ENCODE measurements at regions of chr1 and their contacts with region 1.

Region 1: DNA sequence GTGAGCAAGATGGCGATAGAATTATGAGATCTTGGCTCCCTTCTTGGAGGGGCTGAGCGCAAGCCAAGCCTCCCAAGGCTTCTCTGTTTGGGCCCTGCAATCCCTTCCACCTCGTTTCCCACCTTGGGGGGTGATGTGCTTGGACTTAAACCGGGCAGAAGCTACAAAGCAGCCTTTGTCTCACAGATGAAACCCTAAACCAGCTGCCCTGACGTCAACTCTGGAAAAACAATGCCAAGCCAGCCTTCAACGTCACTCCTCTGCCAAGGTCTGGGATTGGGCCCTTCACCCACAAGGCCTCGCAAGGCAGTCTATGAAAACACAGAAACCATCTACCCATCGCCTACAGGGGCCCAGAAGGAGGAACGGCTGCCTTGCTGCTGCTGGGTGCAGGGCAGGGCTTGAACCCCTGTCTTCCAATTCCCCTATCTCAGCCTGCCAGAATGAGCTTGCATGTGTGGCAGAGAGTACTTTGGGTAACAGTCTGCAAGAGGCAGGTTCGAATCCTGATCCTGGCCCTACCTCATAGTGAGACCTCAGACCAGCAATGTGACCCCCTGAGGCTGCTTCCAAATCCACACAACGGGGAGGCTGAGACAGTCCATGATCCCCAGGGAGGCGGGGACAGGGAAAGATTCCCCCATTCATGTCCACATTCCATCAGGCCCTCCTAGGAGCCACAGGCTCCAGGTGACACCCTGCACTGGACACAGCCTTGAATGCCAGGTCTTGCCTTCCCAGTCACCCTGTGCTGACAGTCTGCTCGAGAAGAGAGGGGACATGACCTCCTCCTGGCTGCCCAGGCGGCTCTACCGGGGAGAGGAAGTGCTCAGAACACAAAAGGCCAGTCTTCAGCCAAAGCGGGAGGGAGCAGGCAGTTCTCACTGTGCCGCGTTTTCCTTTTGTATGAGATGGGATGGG is 15.0 kb downstream of the IFFO2 start:
- DNase-seq: peak in 1 of 2 donors; percentile 56
- ATAC-seq: peak in 7 of 8 donors; percentile 42 to 80 (median 78)
- H3K4me3 ChIP-seq: no peak overlapping the region
- H3K27ac ChIP-seq: peak overlapping the region; percentile 14 to 82 (median 66)
- H3K4me1 ChIP-seq: peaks cover 36 to 85% (median 66%) of the 10 kb centered on the region in 9 donors
- H3K27me3 ChIP-seq: no peaks in the 10 kb centered on the region
- CTCF ChIP-seq: no peak

Region 2: GRCh38 chr1:18868801-18869424 is 72.6 kb before region 1 on chr1:
- intact Hi-C with region 1: no loop called
- DNase-seq: no peak
- ATAC-seq: no peak
- H3K4me3 ChIP-seq: no peak overlapping the region
- H3K27ac ChIP-seq: no peak overlapping the region
- H3K4me1 ChIP-seq: no peaks in the 10 kb centered on the region
- H3K27me3 ChIP-seq: peaks cover 0 to 26% (median 4%) of the 10 kb centered on the region in 7 donors
- CTCF ChIP-seq: no peak

Region 3: GRCh38 chr1:18926315-18927081 is 15.0 kb before region 1 on chr1:
- intact Hi-C with region 1: loop called in 1 of 10 experiments (anchors 2 kb)
- DNase-seq: peak in 1 of 2 donors; percentile 85
- ATAC-seq: peak; percentile 40 to 76 (median 68)
- H3K4me3 ChIP-seq: peak overlapping the region in 5 of 10 donors; percentile 12 to 39 (median 17)
- H3K27ac ChIP-seq: peak overlapping the region; percentile 81 to 97 (median 90)
- H3K4me1 ChIP-seq: peaks cover 48 to 89% (median 64%) of the 10 kb centered on the region in 9 donors
- H3K27me3 ChIP-seq: no peaks in the 10 kb centered on the region
- CTCF ChIP-seq: peak in 4 of 9 donors; percentile 7 to 26 (median 18)

Region 4: DNA sequence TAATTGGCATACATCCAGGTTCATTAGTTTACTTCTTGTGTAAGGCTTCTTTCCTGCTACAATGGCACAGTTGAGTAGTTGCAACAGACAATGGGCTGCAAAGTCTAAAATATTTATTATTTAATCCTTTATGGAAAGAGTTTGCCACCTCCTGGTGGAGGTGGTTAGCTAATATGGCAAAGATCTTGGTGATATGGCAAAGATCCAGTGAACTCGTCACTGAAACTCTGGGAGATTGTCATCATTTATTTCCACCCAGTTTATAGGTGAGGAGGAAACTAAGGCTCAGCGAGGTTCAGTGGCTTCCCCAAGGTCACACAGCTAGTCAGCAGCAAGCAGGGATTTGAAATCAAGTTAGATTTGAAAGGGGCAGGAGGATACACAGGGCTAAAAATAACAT is 31.1 kb after region 1 on chr1:
- intact Hi-C with region 1: no loop called
- DNase-seq: no peak
- ATAC-seq: peak in 3 of 8 donors; percentile 37 to 53 (median 42)
- H3K4me3 ChIP-seq: no peak overlapping the region
- H3K27ac ChIP-seq: no peak overlapping the region
- H3K4me1 ChIP-seq: peaks cover 0 to 14% (median 4%) of the 10 kb centered on the region in 9 donors
- H3K27me3 ChIP-seq: peaks cover 0 to 9% (median 0%) of the 10 kb centered on the region in 7 donors
- CTCF ChIP-seq: peak in 8 of 9 donors; percentile 10 to 65 (median 42)

Region 5: GRCh38 chr1:19000065-19000464 is 58.6 kb after region 1 on chr1:
- intact Hi-C with region 1: loop called in 1 of 10 experiments (anchors 1 kb)
- DNase-seq: no peak
- ATAC-seq: no peak
- H3K4me3 ChIP-seq: no peak overlapping the region
- H3K27ac ChIP-seq: no peak overlapping the region
- H3K4me1 ChIP-seq: peaks cover 0 to 9% (median 0%) of the 10 kb centered on the region in 9 donors
- H3K27me3 ChIP-seq: peaks cover 0 to 18% (median 5%) of the 10 kb centered on the region in 7 donors
- CTCF ChIP-seq: no peak

Region 6: GRCh38 chr1:19101244-19101643 is 159.8 kb after region 1 on chr1:
- intact Hi-C with region 1: no loop called
- DNase-seq: no peak
- ATAC-seq: no peak
- H3K4me3 ChIP-seq: no peak overlapping the region
- H3K27ac ChIP-seq: no peak overlapping the region
- H3K4me1 ChIP-seq: peaks cover 0 to 3% (median 0%) of the 10 kb centered on the region in 9 donors
- H3K27me3 ChIP-seq: no peaks in the 10 kb centered on the region
- CTCF ChIP-seq: no peak

Region 7: DNA sequence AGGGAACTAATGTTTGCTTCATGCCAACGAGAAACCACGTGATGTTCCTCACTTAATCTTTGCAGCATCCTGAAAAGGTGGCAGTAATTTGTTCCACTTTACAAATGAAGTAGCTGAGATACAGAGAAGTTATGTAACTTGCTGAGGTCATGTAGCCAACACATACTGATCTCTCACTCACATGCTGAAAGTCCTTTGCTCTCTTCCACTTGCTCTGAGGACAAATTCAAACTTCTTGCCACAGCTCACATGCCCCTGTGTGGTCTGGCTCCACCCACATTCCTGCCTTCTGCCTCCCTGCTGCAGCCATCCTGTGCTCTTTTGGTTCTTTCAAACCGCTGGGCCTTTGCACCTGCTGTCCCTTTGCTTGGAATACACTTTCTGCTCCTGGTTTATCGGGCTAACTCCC is 802.9 kb after region 1 on chr1:
- intact Hi-C with region 1: no loop called
- DNase-seq: no peak
- ATAC-seq: peak in 3 of 8 donors; percentile 24 to 58 (median 57)
- H3K4me3 ChIP-seq: no peak overlapping the region
- H3K27ac ChIP-seq: no peak overlapping the region
- H3K4me1 ChIP-seq: no peaks in the 10 kb centered on the region
- H3K27me3 ChIP-seq: no peaks in the 10 kb centered on the region
- CTCF ChIP-seq: no peak

Measured in heart right ventricle (tissue), 16 donors.